Activated T-helper 1 cell treated with anti-CD3 and anti-CD28 coated beads, Interleukin-12 subunit alpha, Interleukin-12 subunit beta, Interleukin-2, Interleukin-4 antibody, amounts not matched to agents 30 ng/mL and 10 ng/mL and 1 ng/mL, durations not matched to agents 14 hours and 24 hours and 36 hours (primary cell): ENCODE measurements at regions of chr3 and their contacts with region 1.

Region 1: DNA sequence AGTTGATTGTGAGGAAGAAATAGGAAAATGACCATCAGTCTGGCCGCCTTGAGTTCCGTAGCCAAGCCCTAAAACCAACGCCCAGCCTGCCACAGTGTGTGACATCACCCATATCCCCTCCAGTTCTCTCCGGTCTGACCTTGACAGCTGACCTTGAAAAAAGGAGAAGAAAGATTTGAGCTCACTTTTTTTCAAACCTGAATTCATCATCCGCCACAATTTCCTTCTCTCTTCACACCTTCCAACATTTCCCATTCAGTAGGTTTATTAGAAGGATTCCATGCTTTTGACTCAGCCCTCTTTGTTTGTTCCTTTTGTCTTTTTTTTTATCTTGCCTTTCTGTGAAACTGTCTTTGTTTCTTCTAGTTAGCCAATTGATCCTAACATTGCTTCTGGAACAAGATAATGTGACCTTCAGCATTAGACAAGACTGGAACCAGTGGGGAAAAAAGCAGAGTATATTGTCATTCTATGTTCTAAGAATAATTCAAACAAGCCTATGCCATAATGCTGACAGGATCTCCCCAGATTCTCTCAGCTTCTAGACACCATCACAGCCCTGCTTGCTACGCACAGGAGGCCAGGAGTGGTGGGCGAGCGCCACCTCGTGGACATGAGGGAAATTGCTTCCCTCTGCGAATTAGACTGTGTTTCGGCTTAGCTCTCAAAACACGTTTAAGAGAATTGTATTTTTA is 283.1 kb downstream of the FGF12 start:
- DNase-seq: peak; percentile 33
- H3K4me3 Mint-ChIP-seq: no peak overlapping the region
- H3K27ac Mint-ChIP-seq: no peak overlapping the region
- H3K4me1 Mint-ChIP-seq: no peaks in the 10 kb centered on the region
- H3K27me3 Mint-ChIP-seq: peaks cover 3% of the 10 kb centered on the region

Region 2: GRCh38 chr3:190883973-190884832 is 1560.0 kb before region 1 on chr3:
- intact Hi-C with region 1: loop called (anchors 5 kb)
- DNase-seq: no peak
- H3K4me3 Mint-ChIP-seq: no peak overlapping the region
- H3K27ac Mint-ChIP-seq: no peak overlapping the region
- H3K4me1 Mint-ChIP-seq: no peaks in the 10 kb centered on the region
- H3K27me3 Mint-ChIP-seq: no peaks in the 10 kb centered on the region

Region 3: GRCh38 chr3:192130534-192131132 is 313.6 kb before region 1 on chr3:
- intact Hi-C with region 1: loop called (anchors 1 kb)
- DNase-seq: no peak
- H3K4me3 Mint-ChIP-seq: no peak overlapping the region
- H3K27ac Mint-ChIP-seq: no peak overlapping the region
- H3K4me1 Mint-ChIP-seq: no peaks in the 10 kb centered on the region
- H3K27me3 Mint-ChIP-seq: no peaks in the 10 kb centered on the region

Region 4: GRCh38 chr3:192188218-192188835 is 255.9 kb before region 1 on chr3:
- intact Hi-C with region 1: loop called (anchors 1 kb)
- DNase-seq: no peak
- H3K4me3 Mint-ChIP-seq: no peak overlapping the region
- H3K27ac Mint-ChIP-seq: no peak overlapping the region
- H3K4me1 Mint-ChIP-seq: no peaks in the 10 kb centered on the region
- H3K27me3 Mint-ChIP-seq: no peaks in the 10 kb centered on the region

Region 5: DNA sequence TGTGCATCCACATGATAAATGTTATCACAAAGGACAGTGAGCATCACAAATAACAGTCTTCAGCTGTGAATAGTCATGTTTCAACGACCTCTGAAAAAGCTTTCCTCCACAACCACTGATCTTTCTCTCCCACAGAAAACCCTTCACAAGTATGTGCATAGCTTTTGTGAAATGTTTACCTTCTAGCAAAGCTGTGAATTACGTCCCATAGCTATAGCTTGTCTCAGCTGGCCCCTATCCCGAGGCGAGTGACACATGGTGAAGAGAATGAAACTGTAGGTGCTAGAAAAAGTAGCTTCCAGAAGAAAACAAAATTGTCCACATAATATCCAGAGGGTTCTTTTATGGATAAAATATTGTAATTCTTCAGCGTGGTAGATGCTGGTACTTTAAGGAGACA is 101.1 kb after region 1 on chr3:
- intact Hi-C with region 1: no loop called
- DNase-seq: no peak
- H3K4me3 Mint-ChIP-seq: no peak overlapping the region
- H3K27ac Mint-ChIP-seq: no peak overlapping the region
- H3K4me1 Mint-ChIP-seq: no peaks in the 10 kb centered on the region
- H3K27me3 Mint-ChIP-seq: no peaks in the 10 kb centered on the region

Region 6: DNA sequence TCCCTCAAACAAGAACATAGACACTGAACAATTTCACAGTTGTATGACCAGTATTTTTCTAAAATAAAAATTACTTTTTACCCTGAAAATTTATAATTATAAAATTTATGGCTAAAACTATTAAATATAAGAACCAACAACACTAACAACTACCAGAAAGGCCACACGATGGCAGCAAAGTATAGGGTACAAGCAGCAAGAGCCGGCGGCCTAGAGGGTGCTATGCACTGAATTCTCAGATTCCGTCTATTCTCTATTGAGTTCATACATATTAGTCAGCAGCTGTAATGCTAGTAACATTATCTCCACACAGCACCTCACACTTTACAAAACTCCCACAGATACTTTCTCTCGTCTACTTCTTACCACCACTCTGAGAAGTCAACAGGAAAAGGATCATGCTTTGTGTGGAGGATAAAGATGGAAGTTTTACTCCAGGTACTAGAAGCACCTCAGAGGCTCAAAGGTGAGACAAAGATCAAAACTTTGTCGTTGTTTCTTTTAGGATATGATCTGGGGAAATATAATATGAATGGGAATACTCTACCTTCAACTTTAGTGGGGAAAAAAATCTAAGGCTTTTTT is 122.6 kb after region 1 on chr3:
- intact Hi-C with region 1: no loop called
- DNase-seq: peak; percentile 41
- H3K4me3 Mint-ChIP-seq: no peak overlapping the region
- H3K27ac Mint-ChIP-seq: no peak overlapping the region
- H3K4me1 Mint-ChIP-seq: peaks cover 9% of the 10 kb centered on the region
- H3K27me3 Mint-ChIP-seq: peaks cover 14% of the 10 kb centered on the region